Mammary epithelial cell (primary cell): ENCODE measurements at regions of chr18 and their contacts with region 1.

Region 1: DNA sequence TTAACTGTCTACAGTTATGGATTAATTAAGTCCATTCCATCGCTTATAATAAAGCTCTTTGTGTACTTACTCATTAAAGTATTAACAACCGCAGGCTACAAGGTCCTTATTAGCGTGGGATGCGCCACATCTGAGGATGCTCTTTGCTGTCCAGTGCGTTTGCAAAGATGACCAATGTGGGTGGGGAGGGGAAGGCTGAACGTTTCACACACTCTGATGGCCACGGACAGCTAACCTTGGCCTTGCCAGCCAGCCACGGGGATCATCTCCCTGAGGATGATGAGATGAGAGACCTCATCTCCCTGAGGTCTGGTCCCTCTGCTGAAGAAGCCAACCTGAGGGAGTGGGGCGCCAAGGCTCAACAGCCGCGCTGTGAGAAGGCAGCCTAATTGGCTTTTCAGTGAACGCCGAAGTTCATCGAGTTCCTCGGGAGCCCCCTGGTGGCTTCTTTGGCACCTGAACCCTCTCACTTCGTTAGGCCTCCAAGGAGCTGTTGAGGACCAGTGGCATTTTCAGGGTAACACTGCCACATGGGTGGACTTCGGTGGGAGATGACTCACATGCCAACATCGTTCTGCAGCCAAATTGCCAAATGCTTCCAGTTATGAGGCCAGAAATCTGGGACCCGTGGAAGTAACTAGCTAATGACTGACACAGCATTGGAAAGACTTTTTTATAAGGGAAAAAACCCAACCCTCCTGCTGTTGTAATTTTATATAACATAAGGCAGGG is 69.3 kb upstream of the SEC11C start:
- DNase-seq: peak; percentile 67
- H3K4me3 ChIP-seq: no peak overlapping the region
- H3K27ac ChIP-seq: no peak overlapping the region
- H3K4me1 ChIP-seq: peaks cover 3% of the 10 kb centered on the region
- H3K27me3 ChIP-seq: no peaks in the 10 kb centered on the region
- CTCF ChIP-seq: peak; percentile 86 to 88

Region 2: GRCh38 chr18:58896268-58896667 is 174.1 kb before region 1 on chr18:
- CTCF ChIA-PET with region 1: no interaction called
- dilution Hi-C with region 1: loop called (anchors 5 kb)
- in situ Hi-C with region 1: no loop called
- intact Hi-C with region 1: no loop called
- DNase-seq: no peak
- H3K4me3 ChIP-seq: no peak overlapping the region
- H3K27ac ChIP-seq: no peak overlapping the region
- H3K4me1 ChIP-seq: peaks cover 10% of the 10 kb centered on the region
- H3K27me3 ChIP-seq: no peaks in the 10 kb centered on the region
- CTCF ChIP-seq: no peak